Lower leg skin (tissue), 4 donors: ENCODE measurements at regions of chr12 and their contacts with region 1.

Region 1: GRCh38 chr12:10771132-10771733 is 31.2 kb downstream of the TAS2R7 start:
- DNase-seq: no peak
- H3K4me3 ChIP-seq: no peak overlapping the region
- CTCF ChIP-seq: peak in 1 of 3 donors; percentile 32
- POLR2A ChIP-seq: no peak

Region 2: DNA sequence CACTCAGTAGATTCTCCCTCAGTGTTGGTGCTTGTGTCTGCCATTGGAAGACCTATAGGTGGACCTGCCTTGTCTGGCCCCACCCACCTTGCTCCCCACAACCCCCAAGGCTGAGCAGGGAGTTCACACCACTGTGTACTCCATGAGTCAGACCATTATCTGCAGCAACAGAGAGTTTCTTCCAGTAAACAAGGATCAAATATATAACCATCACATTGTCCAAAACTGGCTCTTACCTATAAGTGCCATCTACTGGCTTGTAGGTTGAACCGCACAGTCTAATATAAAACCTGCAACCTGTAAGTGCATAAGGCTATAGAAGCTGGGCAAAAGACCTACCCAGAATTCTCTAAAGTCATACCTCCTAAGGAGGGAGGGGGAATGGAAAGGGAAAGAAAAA is 130.2 kb after region 1 on chr12:
- intact Hi-C with region 1: no loop called
- DNase-seq: no peak
- H3K4me3 ChIP-seq: no peak overlapping the region
- CTCF ChIP-seq: no peak
- POLR2A ChIP-seq: no peak

Region 3: DNA sequence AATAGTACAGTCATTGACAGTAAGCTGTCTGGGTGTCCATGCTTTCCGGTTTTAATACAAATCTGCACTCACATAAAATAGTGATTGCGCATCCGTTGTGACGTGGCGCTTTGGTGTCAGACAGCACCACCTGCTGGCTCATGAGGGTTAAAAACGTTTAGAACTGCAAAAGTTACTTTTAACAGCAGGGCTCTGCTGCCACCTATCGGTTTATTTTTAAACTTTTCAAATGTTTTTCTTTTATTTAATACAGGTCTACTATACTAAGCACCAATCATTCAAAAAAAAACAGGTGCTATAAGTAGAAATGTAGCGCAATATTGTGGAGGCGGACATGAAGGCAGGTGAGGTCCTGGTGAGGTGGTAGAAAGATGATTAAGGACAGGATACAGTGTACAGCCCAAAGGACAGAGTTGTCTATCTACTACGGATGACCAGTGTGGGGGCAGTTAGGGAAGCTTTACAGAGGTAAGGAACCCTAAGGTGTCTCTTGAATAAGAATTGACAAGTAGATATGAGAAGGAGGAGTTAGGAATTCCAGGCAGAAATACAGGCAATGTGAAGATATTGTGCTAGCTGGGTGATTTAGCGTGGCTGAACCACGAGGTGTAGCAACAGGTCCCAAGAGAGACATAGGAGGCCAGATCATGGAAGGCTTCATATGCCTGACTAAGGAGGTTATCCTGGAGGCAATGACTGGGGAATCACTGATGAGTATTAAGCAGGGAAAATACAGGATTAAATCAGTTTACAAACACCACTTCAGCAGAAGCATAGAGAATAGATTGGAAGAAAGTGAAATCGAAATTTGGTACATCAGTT is 715.6 kb after region 1 on chr12:
- intact Hi-C with region 1: loop called (anchors 5 kb)
- DNase-seq: peak; percentile 62 to 90
- H3K4me3 ChIP-seq: no peak overlapping the region
- CTCF ChIP-seq: peak in 1 of 3 donors; percentile 65
- POLR2A ChIP-seq: no peak